ENCODE measurements at regions of chr7 and their contacts with region 1.

Region 1: DNA sequence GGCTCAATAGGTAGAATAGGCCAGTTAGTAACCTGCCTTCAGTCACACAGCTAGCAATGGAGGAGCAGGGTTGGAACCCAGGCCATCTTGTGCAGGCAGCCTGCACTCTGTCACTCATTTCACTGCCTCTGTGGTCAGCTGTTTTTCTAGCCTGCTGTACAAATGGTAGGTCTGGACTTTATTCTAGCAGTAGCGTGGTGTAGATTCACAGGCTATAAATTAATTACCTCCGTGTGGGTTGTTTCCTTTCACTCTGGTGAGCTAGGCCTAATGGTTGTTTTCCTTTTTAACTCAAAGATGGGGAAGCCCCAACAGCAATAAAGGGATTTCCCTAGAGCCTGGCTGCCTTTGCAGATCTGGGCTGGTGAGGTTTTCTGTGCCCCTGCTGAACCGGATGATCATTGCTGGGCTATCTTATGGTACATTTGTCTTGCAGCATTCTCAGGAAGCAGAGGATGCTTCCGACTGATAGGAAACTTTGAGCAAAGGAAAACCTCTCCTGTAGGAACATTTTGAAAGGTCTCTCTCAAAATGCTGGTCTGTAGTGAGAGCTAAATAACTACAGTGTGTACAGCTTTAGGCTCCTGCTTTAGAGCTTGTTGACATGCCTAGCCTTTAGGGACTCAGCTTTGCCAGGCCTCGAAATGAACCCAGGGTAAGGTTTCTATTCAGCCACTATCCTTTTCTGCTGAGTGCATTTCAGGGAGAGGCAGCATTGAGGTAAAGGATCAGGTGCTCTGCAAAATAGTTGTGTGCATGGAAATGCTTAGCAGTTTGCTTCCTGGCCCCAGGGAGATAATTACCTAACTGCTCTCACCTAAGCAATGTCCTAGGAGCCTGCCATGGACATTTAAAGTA is 157.4 kb downstream of the ST7 start:
- DNase-seq: no peak
- H3K4me3 ChIP-seq: no peak overlapping the region
- H3K27ac ChIP-seq: no peak overlapping the region
- H3K4me1 ChIP-seq: peaks cover 2% of the 10 kb centered on the region
- H3K27me3 ChIP-seq: no peaks in the 10 kb centered on the region
- CTCF ChIP-seq: no peak
- EP300 ChIP-seq: no peak
- POLR2A ChIP-seq: no peak

Region 2: DNA sequence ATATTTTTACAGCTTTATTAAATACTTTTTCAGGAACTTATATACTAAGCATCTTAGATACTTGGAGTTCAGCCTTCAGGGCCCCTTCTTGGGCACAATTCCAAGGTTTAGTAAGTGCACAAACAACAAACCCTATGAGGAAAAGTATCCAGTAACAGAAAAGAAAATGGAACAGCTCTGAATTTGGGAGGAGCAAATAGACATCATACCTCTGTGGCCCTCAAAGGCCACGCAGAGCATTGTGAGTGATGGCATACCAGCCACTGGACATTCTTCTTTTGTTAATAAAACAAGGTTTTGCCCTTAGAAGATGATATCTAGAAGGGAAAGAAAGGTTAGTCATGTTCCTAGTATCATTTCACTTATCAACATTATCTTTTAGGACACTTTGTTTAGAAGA is 111.4 kb before region 1 on chr7:
- intact Hi-C with region 1: loop called in 1 of 4 experiments (anchors 5 kb)
- DNase-seq: no peak
- H3K4me3 ChIP-seq: no peak overlapping the region
- H3K27ac ChIP-seq: no peak overlapping the region
- H3K4me1 ChIP-seq: no peaks in the 10 kb centered on the region
- H3K27me3 ChIP-seq: no peaks in the 10 kb centered on the region
- CTCF ChIP-seq: no peak
- EP300 ChIP-seq: no peak
- POLR2A ChIP-seq: no peak

Region 3: GRCh38 chr7:117014673-117015133 is 96.0 kb before region 1 on chr7:
- intact Hi-C with region 1: no loop called
- DNase-seq: peak; percentile 54 to 62 (median 55)
- H3K4me3 ChIP-seq: no peak overlapping the region
- H3K27ac ChIP-seq: no peak overlapping the region
- H3K4me1 ChIP-seq: no peaks in the 10 kb centered on the region
- H3K27me3 ChIP-seq: no peaks in the 10 kb centered on the region
- CTCF ChIP-seq: no peak
- EP300 ChIP-seq: no peak
- POLR2A ChIP-seq: no peak

Region 4: GRCh38 chr7:117230276-117231046 is 119.8 kb after region 1 on chr7:
- intact Hi-C with region 1: no loop called
- DNase-seq: no peak
- H3K4me3 ChIP-seq: no peak overlapping the region
- H3K27ac ChIP-seq: no peak overlapping the region
- H3K4me1 ChIP-seq: peaks cover 4% of the 10 kb centered on the region
- H3K27me3 ChIP-seq: no peaks in the 10 kb centered on the region
- CTCF ChIP-seq: no peak
- EP300 ChIP-seq: no peak
- POLR2A ChIP-seq: no peak

Region 5: GRCh38 chr7:117435475-117436043 is 324.9 kb after region 1 on chr7:
- intact Hi-C with region 1: no loop called
- DNase-seq: no peak
- H3K4me3 ChIP-seq: no peak overlapping the region
- H3K27ac ChIP-seq: no peak overlapping the region
- H3K4me1 ChIP-seq: no peaks in the 10 kb centered on the region
- H3K27me3 ChIP-seq: no peaks in the 10 kb centered on the region
- CTCF ChIP-seq: no peak
- EP300 ChIP-seq: no peak
- POLR2A ChIP-seq: no peak

Measured in ovary (tissue), 10 donors.